Lower lobe of right lung (tissue), 2 donors: ENCODE measurements at regions of chr20 and their contacts with region 1.

Region 1: DNA sequence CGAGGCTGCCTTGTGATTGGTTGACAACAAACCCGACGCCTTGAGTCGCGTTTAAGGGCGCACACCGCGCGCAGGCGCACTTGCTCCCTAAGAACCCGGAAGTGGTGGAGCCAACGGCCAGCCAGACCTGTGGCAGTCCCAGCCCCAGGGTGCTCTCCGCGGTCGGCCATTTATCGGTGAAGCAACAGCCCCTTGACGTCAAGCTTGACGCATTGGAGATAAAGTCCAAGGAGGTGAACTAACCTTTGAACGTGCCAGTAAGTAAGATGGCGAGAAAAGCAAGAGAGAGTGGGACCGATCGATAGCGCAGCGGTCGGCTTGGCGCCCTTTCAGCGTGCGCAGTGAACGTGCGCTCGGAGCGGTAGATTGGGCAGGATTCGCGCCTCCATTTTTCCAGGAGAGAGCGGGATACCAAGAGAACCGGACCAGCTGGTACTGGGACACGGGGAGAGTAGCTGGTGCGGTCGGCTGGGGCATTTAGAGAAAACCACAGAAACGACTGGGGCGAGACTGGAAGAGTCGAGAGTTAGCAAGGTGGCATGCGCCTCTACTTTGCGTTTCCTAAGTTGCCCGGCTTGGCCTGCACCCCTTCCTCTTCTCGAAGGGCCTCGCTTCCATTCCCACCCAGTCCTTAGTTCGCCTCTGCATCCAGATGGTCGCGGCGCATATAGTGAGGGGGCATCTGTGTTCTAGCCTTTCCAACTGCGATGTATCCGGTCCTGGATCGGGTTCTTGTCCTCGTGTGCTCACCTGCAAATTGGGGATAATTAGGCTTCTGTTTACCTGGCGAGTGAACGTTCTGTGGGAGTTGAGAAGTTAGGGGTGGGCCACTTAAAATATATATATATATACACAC is at the start of gene CSTF1:
- DNase-seq: peak; percentile 99
- ATAC-seq: peak; percentile 98 to 99
- H3K4me3 ChIP-seq: peak within 1 kb of the TSS; percentile 94
- H3K27ac ChIP-seq: peak within 1 kb of the TSS; percentile 89
- H3K4me1 ChIP-seq: peaks cover 26% of the 10 kb centered on the region
- H3K27me3 ChIP-seq: no peaks in the 10 kb centered on the region
- CTCF ChIP-seq: no peak
- total RNA-seq, gene CSTF1: 24.4 TPM

Region 2: GRCh38 chr20:56468316-56469082 is 76.0 kb after region 1 on chr20 and contains the start of gene RTF2:
- intact Hi-C with region 1: loop called (anchors 10 kb)
- DNase-seq: peak; percentile 96
- ATAC-seq: peak; percentile 99 to 100
- H3K4me3 ChIP-seq: peak within 1 kb of the TSS; percentile 77
- H3K27ac ChIP-seq: peak within 1 kb of the TSS; percentile 88
- H3K4me1 ChIP-seq: peaks cover 34% of the 10 kb centered on the region
- H3K27me3 ChIP-seq: no peaks in the 10 kb centered on the region
- CTCF ChIP-seq: no peak
- total RNA-seq, gene RTF2: 68.6 TPM